PC-9 (cell line): ENCODE measurements at regions of chr1 and their contacts with region 1.

Region 1: DNA sequence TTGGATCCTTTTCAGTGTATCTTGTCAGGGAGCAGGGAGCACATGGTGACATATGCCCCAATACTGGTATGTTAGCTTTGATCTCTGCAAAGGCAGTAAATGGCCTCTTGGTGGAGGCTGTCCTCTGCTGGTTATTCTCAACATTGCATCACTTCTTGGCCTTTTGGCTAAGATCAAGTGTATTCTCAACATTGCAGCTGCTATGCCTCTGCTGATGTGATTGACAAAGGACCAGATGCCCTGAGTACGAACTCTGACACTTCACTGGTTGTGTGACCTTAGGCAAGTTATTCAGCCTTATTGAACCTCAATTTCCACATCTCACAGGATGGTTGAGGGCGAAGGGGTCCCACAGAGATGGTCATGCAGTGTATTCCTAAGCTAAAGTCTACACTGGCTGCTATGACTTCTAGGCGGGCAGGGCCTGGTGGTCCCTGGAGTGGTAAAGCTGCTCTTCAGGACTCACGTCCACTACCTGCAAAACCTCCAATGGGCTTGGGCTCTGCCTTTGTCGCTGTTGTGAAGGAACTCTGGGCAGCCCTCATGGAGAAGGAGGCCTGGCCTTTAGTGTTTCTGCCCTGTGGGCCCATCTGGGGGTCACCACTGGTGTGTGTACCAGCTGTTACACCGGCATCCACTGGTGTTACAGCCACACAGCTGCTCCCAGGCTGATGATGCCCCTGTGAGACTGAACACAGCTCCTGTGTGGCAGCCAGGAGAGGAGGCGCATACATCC is 64.8 kb downstream of the DNTTIP2 start:
- DNase-seq: peak; percentile 69 to 84
- H3K4me3 ChIP-seq: no peak overlapping the region
- H3K27ac ChIP-seq: peak overlapping the region; percentile 83
- H3K4me1 ChIP-seq: peaks cover 77% of the 10 kb centered on the region
- H3K27me3 ChIP-seq: no peaks in the 10 kb centered on the region
- CTCF ChIP-seq: peak; percentile 98

Region 2: DNA sequence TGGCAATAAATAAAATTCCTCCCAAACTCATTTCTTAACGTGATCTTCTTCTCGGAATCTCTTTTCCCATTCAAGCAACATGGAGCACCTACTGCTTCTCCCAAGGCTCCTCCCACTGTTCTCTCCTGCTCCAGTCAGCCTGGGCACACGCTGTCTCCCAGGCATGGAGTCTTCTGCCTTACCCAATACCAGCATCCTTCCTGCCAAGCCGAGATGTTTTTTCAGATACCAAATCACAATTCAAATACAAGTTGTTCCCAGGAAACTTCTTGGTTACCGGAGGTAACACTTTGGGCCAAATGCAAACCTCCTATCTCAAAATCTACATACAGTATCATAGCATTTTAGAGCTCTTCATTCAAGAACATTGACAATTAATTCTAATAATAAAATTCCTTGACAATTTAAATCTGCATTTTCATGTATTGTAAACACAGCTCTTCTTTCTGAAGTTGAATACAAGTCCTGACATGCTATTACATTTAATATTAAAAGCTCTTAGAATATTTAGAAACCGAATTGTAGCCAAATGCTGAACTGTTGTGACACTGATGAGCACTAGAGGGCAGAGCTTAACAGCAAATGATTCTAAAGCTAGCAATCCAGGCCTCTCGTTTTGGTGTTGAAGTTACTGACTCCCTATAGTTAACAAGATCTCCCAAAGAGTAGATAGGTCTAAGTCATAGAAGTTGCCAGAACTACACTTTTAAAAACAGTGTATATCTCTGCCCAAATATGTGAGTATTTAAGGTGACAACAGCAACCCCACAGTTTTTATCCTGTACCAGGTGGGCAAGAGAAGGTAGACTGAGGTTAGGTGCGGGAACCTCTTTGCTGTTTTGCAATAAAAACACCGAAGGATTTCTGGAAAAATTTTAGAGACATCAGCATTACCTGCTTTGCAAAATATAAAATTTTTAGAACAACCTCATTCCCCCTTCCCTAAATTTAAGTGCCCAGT is 184.8 kb before region 1 on chr1:
- CTCF ChIA-PET with region 1: interaction called, 47 read pairs
- POLR2A ChIA-PET with region 1: interaction called, 5 read pairs
- intact Hi-C with region 1: loop called (anchors 1 kb)
- DNase-seq: peak; percentile 44 to 74
- H3K4me3 ChIP-seq: no peak overlapping the region
- H3K27ac ChIP-seq: peak overlapping the region; percentile 22
- H3K4me1 ChIP-seq: peaks cover 91% of the 10 kb centered on the region
- H3K27me3 ChIP-seq: no peaks in the 10 kb centered on the region
- CTCF ChIP-seq: peak; percentile 98

Region 3: GRCh38 chr1:93672069-93672468 is 142.2 kb before region 1 on chr1:
- CTCF ChIA-PET with region 1: interaction called, 7 read pairs
- POLR2A ChIA-PET with region 1: interaction called, 3 read pairs
- intact Hi-C with region 1: loop called (anchors 2 kb)
- DNase-seq: peak; percentile 70 to 89
- H3K4me3 ChIP-seq: peak overlapping the region; percentile 22; the same call in 1 of the 2 replicates
- H3K27ac ChIP-seq: peak overlapping the region; percentile 62
- H3K4me1 ChIP-seq: peaks cover 100% of the 10 kb centered on the region
- H3K27me3 ChIP-seq: no peaks in the 10 kb centered on the region
- CTCF ChIP-seq: no peak

Region 4: GRCh38 chr1:93734999-93735398 is 79.2 kb before region 1 on chr1:
- CTCF ChIA-PET with region 1: interaction called, 11 read pairs
- POLR2A ChIA-PET with region 1: no interaction called
- intact Hi-C with region 1: loop called (anchors 1 kb)
- DNase-seq: no peak
- H3K4me3 ChIP-seq: no peak overlapping the region
- H3K27ac ChIP-seq: no peak overlapping the region
- H3K4me1 ChIP-seq: peaks cover 41% of the 10 kb centered on the region
- H3K27me3 ChIP-seq: no peaks in the 10 kb centered on the region
- CTCF ChIP-seq: peak; percentile 50; the same call in 1 of the 2 replicates

Region 5: GRCh38 chr1:93846211-93846991 is 32.2 kb after region 1 on chr1:
- CTCF ChIA-PET with region 1: interaction called, 18 read pairs
- POLR2A ChIA-PET with region 1: interaction called, 4 read pairs
- intact Hi-C with region 1: loop called (anchors 1 kb)
- DNase-seq: peak; percentile 77 to 81
- H3K4me3 ChIP-seq: peak overlapping the region; percentile 94
- H3K27ac ChIP-seq: peak overlapping the region; percentile 81
- H3K4me1 ChIP-seq: peaks cover 36% of the 10 kb centered on the region
- H3K27me3 ChIP-seq: no peaks in the 10 kb centered on the region
- CTCF ChIP-seq: peak; percentile 37; the same call in 1 of the 2 replicates